ENCODE measurements at regions of chr12 and their contacts with region 1.

Region 1: GRCh38 chr12:751192-751998 is 984 bp upstream of the WNK1 start:
- DNase-seq: peak; percentile 61 to 92 (median 72)
- ATAC-seq: peak; percentile 31 to 51 (median 42)
- H3K4me3 ChIP-seq: peak overlapping the region; percentile 65 to 87
- H3K4me3 Mint-ChIP-seq: no peak overlapping the region
- H3K27ac ChIP-seq: peak overlapping the region; percentile 81
- H3K27ac Mint-ChIP-seq: no peak overlapping the region
- H3K4me1 ChIP-seq: peaks cover 15 to 37% of the 10 kb centered on the region in 2 experiments
- H3K4me1 Mint-ChIP-seq: peaks cover 16 to 36% (median 20%) of the 10 kb centered on the region in 3 donors
- H3K27me3 ChIP-seq: no peaks in the 10 kb centered on the region
- H3K27me3 Mint-ChIP-seq: no peaks in the 10 kb centered on the region

Region 2: GRCh38 chr12:575948-576612 is 175.3 kb before region 1 on chr12:
- CTCF ChIA-PET with region 1: interaction called, 3 to 20 read pairs
- POLR2A ChIA-PET with region 1: no interaction called
- DNase-seq: peak; percentile 47 to 91 (median 76)
- ATAC-seq: peak; percentile 98
- H3K4me3 ChIP-seq: peak overlapping the region in 1 of 2 donors; percentile 28
- H3K4me3 Mint-ChIP-seq: peak overlapping the region; percentile 51 to 56 (median 53)
- H3K27ac ChIP-seq: no peak overlapping the region
- H3K27ac Mint-ChIP-seq: peak overlapping the region in 1 of 2 donors; percentile 72
- H3K4me1 ChIP-seq: peaks cover 0 to 16% of the 10 kb centered on the region in 2 experiments
- H3K4me1 Mint-ChIP-seq: peaks cover 13 to 30% (median 21%) of the 10 kb centered on the region in 3 donors
- H3K27me3 ChIP-seq: no peaks in the 10 kb centered on the region
- H3K27me3 Mint-ChIP-seq: no peaks in the 10 kb centered on the region

Region 3: DNA sequence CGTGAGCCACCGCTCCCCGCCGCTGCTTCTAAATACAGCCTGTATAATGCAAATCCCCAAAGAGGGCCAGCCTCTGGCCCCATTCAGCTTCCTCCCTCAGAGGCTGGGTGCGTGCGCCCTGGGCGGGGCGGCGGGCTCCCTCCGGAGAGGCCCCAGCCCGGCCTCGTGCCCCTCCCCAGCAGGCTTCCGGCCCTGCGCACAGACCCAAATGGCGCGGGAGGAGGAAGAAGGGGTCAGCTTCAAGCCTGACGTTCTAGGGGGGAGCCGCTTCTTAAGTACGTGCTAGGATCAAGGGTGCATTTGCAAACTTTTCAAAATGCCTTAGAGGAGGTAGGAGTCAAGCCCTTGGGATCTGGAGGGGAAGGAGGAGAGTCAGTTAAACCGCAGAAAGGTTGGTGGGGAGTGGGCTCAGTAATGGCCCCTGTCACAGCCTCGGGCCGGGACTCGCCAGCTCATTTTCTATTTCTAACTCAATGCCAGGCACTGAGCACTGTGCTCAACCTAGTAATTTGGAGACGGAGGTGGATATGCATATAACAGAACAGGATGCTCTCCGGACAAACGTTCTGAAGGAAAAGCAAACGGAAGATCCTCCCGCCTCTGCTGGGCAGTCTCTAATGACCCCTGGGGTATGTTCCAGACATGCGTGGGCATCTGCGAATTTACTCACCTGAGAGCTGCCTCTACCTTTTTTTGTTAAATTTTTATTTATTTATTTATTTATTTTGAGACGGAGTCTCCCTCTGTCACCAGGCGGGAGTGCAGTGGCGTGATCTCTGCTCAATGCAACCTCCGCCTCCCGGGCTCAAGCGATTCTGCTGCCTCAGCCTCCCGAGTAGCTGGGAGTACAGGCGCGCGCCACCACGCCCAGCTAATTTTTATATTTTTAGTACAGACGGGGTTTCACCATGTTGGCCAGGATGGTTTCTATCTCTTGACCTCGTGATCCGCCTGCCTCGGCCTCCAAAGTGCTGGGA is 120.5 kb before region 1 on chr12:
- CTCF ChIA-PET with region 1: interaction called in 1 of 2 experiments, 16 read pairs
- POLR2A ChIA-PET with region 1: no interaction called
- DNase-seq: peak in 29 of 35 experiments; percentile 37 to 79 (median 59)
- ATAC-seq: peak in 3 of 4 experiments; percentile 94 to 99 (median 98)
- H3K4me3 ChIP-seq: peak overlapping the region; percentile 72 to 86
- H3K4me3 Mint-ChIP-seq: peak overlapping the region in 2 of 3 donors; percentile 85 to 93
- H3K27ac ChIP-seq: peak overlapping the region; percentile 82
- H3K27ac Mint-ChIP-seq: peak overlapping the region; percentile 96 to 98
- H3K4me1 ChIP-seq: peaks cover 0 to 3% of the 10 kb centered on the region in 2 experiments
- H3K4me1 Mint-ChIP-seq: peaks cover 8 to 38% (median 26%) of the 10 kb centered on the region in 3 donors
- H3K27me3 ChIP-seq: no peaks in the 10 kb centered on the region
- H3K27me3 Mint-ChIP-seq: no peaks in the 10 kb centered on the region

Region 4: DNA sequence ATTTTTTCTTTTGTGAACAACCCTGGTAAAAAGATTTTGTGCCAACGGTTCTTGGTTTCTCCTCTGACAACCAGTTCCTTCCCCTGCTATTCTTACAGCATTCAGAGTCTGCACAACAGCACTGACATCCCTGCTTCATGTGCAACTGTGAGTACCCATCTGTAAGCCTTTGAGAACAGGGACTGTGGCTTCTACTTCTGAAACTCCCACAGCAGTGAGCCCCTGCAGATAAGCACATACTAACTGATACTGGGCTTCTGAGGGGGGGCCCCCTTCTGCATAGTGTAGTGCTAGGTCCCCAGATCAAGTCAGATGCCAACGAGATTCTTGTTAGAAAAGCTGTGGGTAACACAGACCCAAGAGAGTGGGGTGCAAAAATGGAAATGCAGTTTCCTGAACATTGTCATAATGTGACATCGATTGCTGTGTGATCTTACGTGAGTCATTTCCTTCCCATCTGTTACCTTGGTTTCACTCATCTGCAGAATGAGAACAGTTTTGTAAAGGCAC is 77.1 kb before region 1 on chr12:
- CTCF ChIA-PET with region 1: interaction called, 3 to 5 read pairs
- POLR2A ChIA-PET with region 1: interaction called, 5 to 11 read pairs
- DNase-seq: peak in 34 of 35 experiments; percentile 25 to 86 (median 63)
- ATAC-seq: peak; percentile 81 to 93 (median 90)
- H3K4me3 ChIP-seq: peak overlapping the region in 1 of 2 donors; percentile 5
- H3K4me3 Mint-ChIP-seq: peak overlapping the region; percentile 52 to 64 (median 63)
- H3K27ac ChIP-seq: peak overlapping the region; percentile 87
- H3K27ac Mint-ChIP-seq: peak overlapping the region; percentile 83 to 96
- H3K4me1 ChIP-seq: peaks cover 28 to 60% of the 10 kb centered on the region in 2 experiments
- H3K4me1 Mint-ChIP-seq: peaks cover 33 to 66% (median 60%) of the 10 kb centered on the region in 3 donors
- H3K27me3 ChIP-seq: no peaks in the 10 kb centered on the region
- H3K27me3 Mint-ChIP-seq: no peaks in the 10 kb centered on the region

Region 5: DNA sequence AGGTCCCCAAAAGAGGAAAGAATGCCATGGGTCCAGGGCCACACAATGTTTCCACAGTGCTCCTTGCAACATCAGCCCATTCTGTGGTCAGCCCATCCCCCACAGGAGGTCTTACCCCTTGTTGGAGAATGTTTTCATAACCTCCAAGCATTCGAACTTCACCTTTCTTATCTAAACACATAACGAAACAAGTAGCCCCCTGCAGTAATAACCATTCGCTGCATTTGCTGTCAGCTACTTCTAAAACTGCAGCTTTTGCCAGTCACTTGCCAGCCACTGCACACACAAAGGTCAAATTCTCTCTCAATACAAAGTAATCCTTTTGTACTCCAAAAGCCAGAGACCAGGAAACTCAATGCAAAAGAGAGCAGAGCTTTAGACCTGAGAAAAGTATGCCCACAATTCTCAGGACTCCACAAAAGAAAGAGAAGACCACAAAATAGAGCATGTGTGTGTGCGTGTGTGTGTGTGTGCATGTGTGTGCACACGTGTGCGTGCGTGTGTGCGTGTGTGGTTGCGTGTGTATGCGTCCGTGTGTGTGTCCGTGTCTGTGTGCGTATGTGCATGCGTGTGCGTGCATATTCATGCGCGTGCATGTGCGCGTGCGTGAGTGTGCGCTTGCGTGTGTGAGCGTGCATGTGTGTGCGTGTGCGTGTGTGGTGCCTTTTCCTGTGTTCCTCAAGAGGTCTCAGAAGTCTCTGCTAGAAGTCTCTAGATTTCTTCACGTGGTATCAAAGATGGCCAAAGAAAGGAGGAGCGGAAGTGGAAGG is 56.5 kb before region 1 on chr12:
- CTCF ChIA-PET with region 1: interaction called in 1 of 2 experiments, 3 read pairs
- POLR2A ChIA-PET with region 1: interaction called in 1 of 2 experiments, 10 read pairs
- DNase-seq: no peak
- ATAC-seq: no peak
- H3K4me3 ChIP-seq: no peak overlapping the region
- H3K4me3 Mint-ChIP-seq: no peak overlapping the region
- H3K27ac ChIP-seq: no peak overlapping the region
- H3K27ac Mint-ChIP-seq: no peak overlapping the region
- H3K4me1 ChIP-seq: peaks cover 9 to 10% of the 10 kb centered on the region in 2 experiments
- H3K4me1 Mint-ChIP-seq: peaks cover 26 to 31% (median 28%) of the 10 kb centered on the region in 3 donors
- H3K27me3 ChIP-seq: no peaks in the 10 kb centered on the region
- H3K27me3 Mint-ChIP-seq: no peaks in the 10 kb centered on the region

Region 6: DNA sequence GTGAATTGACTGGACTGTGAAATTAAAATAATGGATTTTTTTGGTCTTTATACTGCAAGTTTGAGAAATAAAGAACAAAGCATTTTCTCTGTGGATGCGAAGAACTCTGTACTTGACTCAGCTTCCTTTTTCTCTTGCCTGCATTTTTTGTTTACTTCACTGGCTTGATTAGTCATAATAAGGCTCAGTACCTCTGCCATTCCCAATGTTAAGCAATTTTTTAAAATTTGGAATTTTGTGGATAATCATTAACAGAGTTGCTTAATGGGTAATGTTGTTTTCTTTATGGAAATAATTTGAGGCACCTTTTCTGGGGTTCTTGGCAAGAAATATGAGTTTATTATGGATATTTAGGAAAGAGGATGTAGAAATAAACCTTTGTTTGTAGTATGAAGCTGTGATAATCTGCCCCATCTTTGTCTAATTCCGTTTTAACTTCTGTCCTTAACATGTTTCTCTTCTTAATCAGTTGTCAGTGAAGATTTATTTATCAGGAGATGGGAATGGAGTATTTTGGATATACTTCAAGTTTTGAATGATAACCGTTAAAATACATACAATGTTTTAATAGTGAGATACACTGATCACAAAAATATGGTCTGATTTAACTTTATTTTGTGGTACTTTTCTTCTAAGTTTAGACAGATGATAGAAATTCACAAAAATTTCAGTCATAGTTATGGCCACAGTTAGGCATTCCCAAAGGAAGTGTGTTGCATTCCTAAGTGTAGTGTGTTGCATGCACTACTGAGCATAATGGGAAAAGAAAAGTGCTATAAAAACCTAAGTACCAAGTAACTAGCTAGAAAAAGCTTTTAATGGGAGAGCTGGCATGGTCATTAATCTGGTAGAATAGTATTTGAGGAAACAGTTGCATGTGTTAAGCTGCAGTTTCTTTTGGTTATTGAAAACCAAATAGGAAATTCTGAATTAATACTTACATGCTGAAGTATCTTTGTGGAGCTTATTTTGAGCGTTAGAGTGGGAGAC is 28.6 kb after region 1 on chr12:
- CTCF ChIA-PET with region 1: interaction called, 6 to 16 read pairs
- POLR2A ChIA-PET with region 1: interaction called, 3 to 12 read pairs
- DNase-seq: no peak
- ATAC-seq: peak; percentile 34 to 68 (median 59)
- H3K4me3 ChIP-seq: no peak overlapping the region
- H3K4me3 Mint-ChIP-seq: peak overlapping the region; percentile 76 to 80 (median 79)
- H3K27ac ChIP-seq: no peak overlapping the region
- H3K27ac Mint-ChIP-seq: peak overlapping the region; percentile 21 to 71
- H3K4me1 ChIP-seq: peaks cover 25 to 31% of the 10 kb centered on the region in 2 experiments
- H3K4me1 Mint-ChIP-seq: peaks cover 76 to 80% (median 77%) of the 10 kb centered on the region in 3 donors
- H3K27me3 ChIP-seq: no peaks in the 10 kb centered on the region
- H3K27me3 Mint-ChIP-seq: no peaks in the 10 kb centered on the region

Region 7: GRCh38 chr12:818733-819132 is 67.3 kb after region 1 on chr12:
- CTCF ChIA-PET with region 1: interaction called in 1 of 2 experiments, 51 read pairs
- POLR2A ChIA-PET with region 1: interaction called in 1 of 2 experiments, 3 read pairs
- DNase-seq: no peak
- ATAC-seq: no peak
- H3K4me3 ChIP-seq: no peak overlapping the region
- H3K4me3 Mint-ChIP-seq: no peak overlapping the region
- H3K27ac ChIP-seq: no peak overlapping the region
- H3K27ac Mint-ChIP-seq: peak overlapping the region; percentile 70 to 80
- H3K4me1 ChIP-seq: peaks cover 2 to 3% of the 10 kb centered on the region in 2 experiments
- H3K4me1 Mint-ChIP-seq: peaks cover 69 to 73% (median 69%) of the 10 kb centered on the region in 3 donors
- H3K27me3 ChIP-seq: no peaks in the 10 kb centered on the region
- H3K27me3 Mint-ChIP-seq: no peaks in the 10 kb centered on the region

Measured in T-cell (primary cell).